Calu3 (cell line): ENCODE measurements at regions of chr4 and their contacts with region 1.

Region 1: DNA sequence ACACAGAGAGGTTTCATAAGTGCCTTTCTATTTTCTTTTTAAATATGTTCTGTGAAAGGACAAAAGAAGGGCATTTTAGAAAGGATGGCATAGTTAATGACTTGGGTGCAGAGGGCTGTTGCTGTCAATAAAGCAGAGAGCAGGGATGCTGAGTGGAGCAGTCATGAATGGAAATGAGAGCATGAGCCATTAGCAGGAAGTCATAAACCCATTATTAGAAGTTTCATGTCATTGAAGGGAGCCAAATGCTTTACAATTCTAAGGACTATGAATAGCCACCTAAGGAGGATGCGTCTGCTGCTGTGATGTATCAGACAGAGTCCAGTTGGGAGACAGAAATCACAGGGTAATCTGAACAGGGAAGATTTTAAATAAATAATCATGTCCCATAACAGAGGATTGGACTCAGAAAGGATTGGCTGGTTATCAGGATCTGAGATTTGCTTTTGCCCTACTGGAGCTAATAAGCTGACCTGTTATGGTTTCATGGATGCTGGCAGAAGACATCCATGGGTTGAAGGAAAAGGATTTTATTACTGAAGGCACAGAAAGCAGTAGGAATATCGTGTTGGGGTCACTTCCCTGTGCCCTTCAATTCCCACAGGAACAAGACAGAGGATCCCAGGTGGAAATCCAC is 47.5 kb upstream of the WDR19 start:
- DNase-seq: no peak
- H3K4me3 Mint-ChIP-seq: no peak overlapping the region
- H3K27ac Mint-ChIP-seq: no peak overlapping the region
- H3K4me1 Mint-ChIP-seq: peaks cover 12% of the 10 kb centered on the region
- H3K27me3 Mint-ChIP-seq: no peaks in the 10 kb centered on the region
- CTCF ChIP-seq: no peak

Region 2: DNA sequence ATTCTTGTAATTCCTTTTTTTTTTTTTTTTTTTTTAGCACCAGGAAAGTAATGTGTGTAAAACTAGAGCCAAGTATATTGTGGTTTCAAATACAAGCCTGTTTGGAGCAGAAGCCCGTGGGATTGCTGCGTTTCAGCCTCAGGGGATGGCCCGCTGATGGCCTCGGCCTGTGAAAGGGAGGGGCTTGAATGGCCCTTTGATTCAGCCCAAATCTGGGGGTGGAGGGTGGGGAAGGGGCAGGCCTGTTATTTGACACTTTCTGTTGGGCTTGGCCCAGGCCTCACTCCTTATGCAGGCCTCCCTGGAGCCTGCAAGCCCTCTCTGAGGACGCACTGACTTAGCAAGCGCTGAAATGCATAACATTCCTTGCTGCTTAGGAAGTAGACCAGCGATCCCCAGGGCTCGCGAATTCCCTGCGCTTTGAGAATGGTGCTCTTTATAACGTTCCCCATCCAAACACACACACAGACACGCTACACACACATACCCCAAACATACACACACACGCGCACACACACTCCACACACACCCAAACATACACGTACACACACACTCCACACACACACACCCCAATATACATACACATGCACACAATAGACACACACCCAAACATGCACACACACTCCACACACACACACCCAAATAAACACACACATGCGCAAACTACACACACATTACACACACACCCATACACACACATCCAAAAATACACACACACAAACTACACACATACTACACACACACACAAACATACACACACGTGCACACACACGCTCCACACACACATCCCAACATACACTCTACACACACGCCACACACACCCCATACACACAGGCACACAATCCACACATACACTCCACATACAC is 381.6 kb before region 1 on chr4:
- CTCF ChIA-PET with region 1: no interaction called
- intact Hi-C with region 1: no loop called
- DNase-seq: peak; percentile 40
- H3K4me3 Mint-ChIP-seq: no peak overlapping the region
- H3K27ac Mint-ChIP-seq: no peak overlapping the region
- H3K4me1 Mint-ChIP-seq: peaks cover 11% of the 10 kb centered on the region
- H3K27me3 Mint-ChIP-seq: no peaks in the 10 kb centered on the region
- CTCF ChIP-seq: no peak

Region 3: GRCh38 chr4:38902695-38903094 is 232.1 kb before region 1 on chr4:
- CTCF ChIA-PET with region 1: interaction called, 20 read pairs
- intact Hi-C with region 1: loop called (anchors 1 kb)
- DNase-seq: no peak
- H3K4me3 Mint-ChIP-seq: no peak overlapping the region
- H3K27ac Mint-ChIP-seq: no peak overlapping the region
- H3K4me1 Mint-ChIP-seq: peaks cover 12% of the 10 kb centered on the region
- H3K27me3 Mint-ChIP-seq: no peaks in the 10 kb centered on the region
- CTCF ChIP-seq: peak; percentile 16

Region 4: GRCh38 chr4:39004758-39005157 is 130.0 kb before region 1 on chr4:
- CTCF ChIA-PET with region 1: no interaction called
- intact Hi-C with region 1: no loop called
- DNase-seq: no peak
- H3K4me3 Mint-ChIP-seq: no peak overlapping the region
- H3K27ac Mint-ChIP-seq: no peak overlapping the region
- H3K4me1 Mint-ChIP-seq: peaks cover 9% of the 10 kb centered on the region
- H3K27me3 Mint-ChIP-seq: no peaks in the 10 kb centered on the region
- CTCF ChIP-seq: no peak

Region 5: GRCh38 chr4:39484582-39485272 is 349.9 kb after region 1 on chr4:
- CTCF ChIA-PET with region 1: no interaction called
- intact Hi-C with region 1: no loop called
- DNase-seq: no peak
- H3K4me3 Mint-ChIP-seq: no peak overlapping the region
- H3K27ac Mint-ChIP-seq: no peak overlapping the region
- H3K4me1 Mint-ChIP-seq: no peaks in the 10 kb centered on the region
- H3K27me3 Mint-ChIP-seq: no peaks in the 10 kb centered on the region
- CTCF ChIP-seq: no peak